GM12878 (cell line): ENCODE measurements at regions of chr1 and their contacts with region 1.

Region 1: DNA sequence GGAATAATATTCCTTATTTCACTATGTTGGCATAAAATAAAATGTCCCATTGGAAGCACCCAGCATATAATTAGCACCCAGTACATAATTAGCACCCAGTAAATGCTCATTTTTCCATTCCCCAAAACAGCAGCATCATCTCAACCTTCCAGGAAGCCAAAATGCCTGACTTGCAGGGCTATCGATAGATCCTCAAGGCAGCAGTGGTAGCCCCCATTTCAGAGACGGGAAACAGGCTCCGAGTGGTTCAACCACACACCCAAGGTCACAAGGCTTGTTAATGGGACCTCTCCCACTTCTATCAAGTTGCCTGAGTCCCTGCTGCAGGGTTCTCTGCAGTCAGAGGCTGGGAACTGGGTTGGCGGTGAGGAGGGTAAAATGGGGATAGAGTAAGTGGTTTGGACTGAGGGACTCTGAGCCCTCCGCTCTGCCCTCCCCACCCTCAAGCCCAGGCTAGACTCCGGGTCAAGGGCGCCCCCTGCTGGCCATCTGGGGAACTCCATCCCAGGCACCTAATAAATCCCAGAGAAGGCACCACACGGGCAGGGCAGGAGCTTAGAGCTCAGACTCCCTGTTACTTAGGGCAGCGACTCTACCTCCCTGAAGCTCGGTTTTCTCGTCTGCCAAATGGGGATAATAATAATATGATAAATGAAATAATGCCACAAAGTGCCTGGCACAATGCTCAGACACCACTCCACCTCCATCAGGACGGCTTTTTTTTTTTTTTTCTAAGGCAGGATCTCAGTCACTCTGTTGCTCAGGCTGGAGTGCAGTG is 21.9 kb upstream of the LAPTM5 start:
- DNase-seq: no peak
- ATAC-seq: peak; percentile 87
- H3K4me3 ChIP-seq: no peak overlapping the region
- H3K27ac ChIP-seq: no peak overlapping the region
- H3K4me1 ChIP-seq: peaks cover 21% of the 10 kb centered on the region
- H3K27me3 ChIP-seq: no peaks in the 10 kb centered on the region
- CTCF ChIP-seq: peak; percentile 91 to 97 (median 97)
- EP300 ChIP-seq: no peak
- POLR2A ChIP-seq: no peak
- RAD21 ChIP-seq: peak; percentile 99

Region 2: DNA sequence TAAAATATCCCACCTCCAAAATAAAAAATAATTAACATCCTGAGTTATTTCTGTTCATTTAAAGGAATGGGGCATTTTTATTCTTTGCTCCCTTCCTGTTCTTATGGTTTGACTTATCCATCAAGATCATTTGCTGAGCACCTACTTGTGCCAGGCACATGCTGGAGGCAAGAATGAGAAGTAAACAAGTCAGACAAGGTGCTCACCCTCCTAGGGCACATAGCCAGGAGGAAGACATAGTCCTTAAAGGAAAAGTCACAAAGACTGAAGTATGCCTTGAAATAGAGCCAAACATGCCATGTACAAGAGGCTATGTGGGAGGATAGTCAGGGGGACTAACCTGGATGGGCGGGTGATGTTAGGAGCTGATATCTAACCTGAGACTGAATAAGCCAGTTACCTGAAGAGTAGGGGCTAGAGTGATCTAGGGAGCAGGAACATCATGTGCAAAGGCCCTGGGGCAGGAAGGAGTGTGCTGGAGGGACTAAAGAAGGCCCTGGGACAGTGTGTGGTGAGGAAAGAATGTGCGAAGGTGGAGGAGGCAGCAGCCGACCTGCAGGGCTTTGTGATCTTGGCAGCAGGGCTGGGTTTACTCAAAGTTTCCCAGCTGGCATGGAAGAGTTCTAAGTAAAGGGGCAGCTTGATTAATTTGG is 289.6 kb before region 1 on chr1:
- CTCF ChIA-PET with region 1: no interaction called
- POLR2A ChIA-PET with region 1: no interaction called
- RAD21 ChIA-PET with region 1: no interaction called
- SMC1A ChIA-PET with region 1: no interaction called
- in situ Hi-C with region 1: no loop called
- intact Hi-C with region 1: no loop called
- DNase-seq: no peak
- ATAC-seq: no peak
- H3K4me3 ChIP-seq: no peak overlapping the region
- H3K27ac ChIP-seq: no peak overlapping the region
- H3K4me1 ChIP-seq: no peaks in the 10 kb centered on the region
- H3K27me3 ChIP-seq: no peaks in the 10 kb centered on the region; a peak in 1 of 4 replicates
- CTCF ChIP-seq: no peak
- EP300 ChIP-seq: no peak
- POLR2A ChIP-seq: no peak
- RAD21 ChIP-seq: no peak

Region 3: GRCh38 chr1:30718636-30719405 is 60.7 kb before region 1 on chr1:
- CTCF ChIA-PET with region 1: interaction called, 516 read pairs
- POLR2A ChIA-PET with region 1: interaction called, 79 read pairs
- RAD21 ChIA-PET with region 1: interaction called, 538 read pairs
- SMC1A ChIA-PET with region 1: interaction called, 427 read pairs
- in situ Hi-C with region 1: loop called (anchors 10 kb)
- intact Hi-C with region 1: loop called (anchors 1 kb)
- DNase-seq: peak; percentile 71
- ATAC-seq: peak; percentile 84
- H3K4me3 ChIP-seq: peak overlapping the region; percentile 90
- H3K27ac ChIP-seq: peak overlapping the region; percentile 93
- H3K4me1 ChIP-seq: peaks cover 18% of the 10 kb centered on the region
- H3K27me3 ChIP-seq: no peaks in the 10 kb centered on the region
- CTCF ChIP-seq: peak; percentile 86 to 95 (median 87); a peak in 5 of 6 replicates
- EP300 ChIP-seq: peak in 1 of 2 experiments; percentile 22; a peak in 1 of 4 replicates
- POLR2A ChIP-seq: peak; percentile 87
- RAD21 ChIP-seq: no peak

Region 4: GRCh38 chr1:30743584-30744059 is 35.9 kb before region 1 on chr1:
- CTCF ChIA-PET with region 1: interaction called, 161 read pairs
- POLR2A ChIA-PET with region 1: interaction called, 5 read pairs
- RAD21 ChIA-PET with region 1: interaction called, 71 read pairs
- SMC1A ChIA-PET with region 1: interaction called, 248 read pairs
- in situ Hi-C with region 1: no loop called
- intact Hi-C with region 1: loop called (anchors 5 kb)
- DNase-seq: peak; percentile 82
- ATAC-seq: peak; percentile 44
- H3K4me3 ChIP-seq: peak overlapping the region; percentile 98
- H3K27ac ChIP-seq: peak overlapping the region; percentile 93
- H3K4me1 ChIP-seq: peaks cover 91% of the 10 kb centered on the region
- H3K27me3 ChIP-seq: no peaks in the 10 kb centered on the region
- CTCF ChIP-seq: no peak; a peak in 1 of 6 replicates
- EP300 ChIP-seq: peak in 1 of 2 experiments; percentile 71; a peak in 2 of 4 replicates
- POLR2A ChIP-seq: no peak; the same call in 1 of the 2 replicates
- RAD21 ChIP-seq: no peak

Region 5: GRCh38 chr1:30763651-30764248 is 15.7 kb before region 1 on chr1:
- CTCF ChIA-PET with region 1: interaction called, 72 read pairs
- POLR2A ChIA-PET with region 1: interaction called, 42 read pairs
- RAD21 ChIA-PET with region 1: interaction called, 198 read pairs
- SMC1A ChIA-PET with region 1: interaction called, 248 read pairs
- in situ Hi-C with region 1: no loop called
- intact Hi-C with region 1: no loop called
- DNase-seq: no peak
- ATAC-seq: no peak
- H3K4me3 ChIP-seq: no peak overlapping the region
- H3K27ac ChIP-seq: peak overlapping the region; percentile 87
- H3K4me1 ChIP-seq: peaks cover 82% of the 10 kb centered on the region
- H3K27me3 ChIP-seq: no peaks in the 10 kb centered on the region
- CTCF ChIP-seq: no peak
- EP300 ChIP-seq: no peak
- POLR2A ChIP-seq: no peak
- RAD21 ChIP-seq: no peak

Region 6: DNA sequence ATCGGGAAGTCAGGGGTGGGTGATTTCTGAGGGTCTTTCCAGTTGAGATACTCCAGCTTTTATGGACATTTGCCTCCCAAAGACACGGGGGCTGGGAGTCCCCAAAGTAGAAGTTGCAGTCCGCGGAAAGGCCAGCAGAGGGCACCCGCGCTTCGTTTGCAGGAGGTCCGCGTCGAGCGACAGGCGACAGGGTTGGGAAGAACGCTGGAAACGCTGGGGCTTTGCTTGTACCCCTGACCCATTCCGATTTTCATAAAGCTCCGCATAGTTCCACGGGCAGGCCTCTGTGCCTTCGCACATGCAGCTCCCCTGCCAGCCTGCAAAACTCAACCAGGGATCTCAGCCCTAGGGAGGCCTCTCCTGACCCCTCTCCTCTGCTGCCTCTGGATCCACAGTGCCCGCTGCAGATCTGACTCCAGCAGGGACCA is 22.3 kb after region 1 on chr1:
- CTCF ChIA-PET with region 1: interaction called, 78 read pairs
- POLR2A ChIA-PET with region 1: interaction called, 3 read pairs
- RAD21 ChIA-PET with region 1: interaction called, 16 read pairs
- SMC1A ChIA-PET with region 1: interaction called, 7 read pairs
- in situ Hi-C with region 1: no loop called
- intact Hi-C with region 1: no loop called
- DNase-seq: no peak
- ATAC-seq: peak; percentile 86
- H3K4me3 ChIP-seq: no peak overlapping the region
- H3K27ac ChIP-seq: no peak overlapping the region
- H3K4me1 ChIP-seq: no peaks in the 10 kb centered on the region
- H3K27me3 ChIP-seq: peaks cover 11 to 17% of the 10 kb centered on the region in 2 experiments
- CTCF ChIP-seq: peak; percentile 94 to 95 (median 95)
- EP300 ChIP-seq: no peak
- POLR2A ChIP-seq: no peak
- RAD21 ChIP-seq: peak; percentile 97

Region 7: GRCh38 chr1:30823969-30824735 is 44.7 kb after region 1 on chr1:
- CTCF ChIA-PET with region 1: no interaction called
- POLR2A ChIA-PET with region 1: no interaction called
- RAD21 ChIA-PET with region 1: no interaction called
- SMC1A ChIA-PET with region 1: no interaction called
- in situ Hi-C with region 1: no loop called
- intact Hi-C with region 1: no loop called
- DNase-seq: peak; percentile 37
- ATAC-seq: peak; percentile 99
- H3K4me3 ChIP-seq: no peak overlapping the region; the same call in 1 of the 2 replicates
- H3K27ac ChIP-seq: no peak overlapping the region
- H3K4me1 ChIP-seq: peaks cover 6% of the 10 kb centered on the region
- H3K27me3 ChIP-seq: peaks cover 11 to 15% of the 10 kb centered on the region in 2 experiments; a peak in 3 of 4 replicates
- CTCF ChIP-seq: no peak
- EP300 ChIP-seq: no peak
- POLR2A ChIP-seq: no peak
- RAD21 ChIP-seq: no peak

Region 8: GRCh38 chr1:30919025-30919881 is 139.8 kb after region 1 on chr1:
- CTCF ChIA-PET with region 1: interaction called, 89 read pairs
- POLR2A ChIA-PET with region 1: interaction called, 3 read pairs
- RAD21 ChIA-PET with region 1: interaction called, 41 read pairs
- SMC1A ChIA-PET with region 1: interaction called, 49 read pairs
- in situ Hi-C with region 1: no loop called
- intact Hi-C with region 1: no loop called
- DNase-seq: no peak
- ATAC-seq: peak; percentile 36; the same call in 1 of the 3 replicates
- H3K4me3 ChIP-seq: no peak overlapping the region
- H3K27ac ChIP-seq: no peak overlapping the region
- H3K4me1 ChIP-seq: no peaks in the 10 kb centered on the region
- H3K27me3 ChIP-seq: no peaks in the 10 kb centered on the region
- CTCF ChIP-seq: no peak
- EP300 ChIP-seq: no peak
- POLR2A ChIP-seq: no peak
- RAD21 ChIP-seq: no peak

Region 9: DNA sequence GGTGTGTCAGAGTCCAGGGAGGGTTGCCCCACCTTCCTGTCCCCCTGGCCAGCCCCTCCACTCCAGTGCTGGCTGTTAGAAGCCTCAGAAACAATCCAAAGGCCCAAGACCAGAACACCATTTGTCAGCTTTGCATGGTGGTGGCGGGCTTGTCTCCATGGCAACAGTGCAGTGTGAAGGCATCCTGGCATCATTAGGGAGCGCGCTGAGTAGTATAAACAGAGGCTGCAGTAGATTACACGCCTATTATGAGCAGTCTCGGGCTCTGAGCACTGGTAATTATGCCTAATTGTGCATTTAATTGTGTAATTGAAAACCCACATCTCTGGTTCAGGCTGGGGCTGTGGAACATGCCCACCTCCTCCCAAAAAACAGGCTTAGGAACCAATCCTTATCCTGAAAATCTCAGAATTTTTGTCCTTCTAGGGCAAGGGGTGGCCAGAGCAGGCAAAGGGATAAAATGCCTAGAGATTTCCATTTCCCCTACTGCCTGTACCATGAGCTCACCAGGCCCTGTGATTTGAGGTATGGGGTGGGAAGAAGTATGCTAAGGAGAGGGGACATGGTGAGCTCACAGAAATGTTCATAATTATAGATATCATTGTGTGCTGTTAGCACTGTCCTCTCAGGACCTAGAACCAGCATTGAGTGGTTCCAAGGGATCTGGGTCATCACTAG is 448.5 kb after region 1 on chr1:
- CTCF ChIA-PET with region 1: no interaction called
- POLR2A ChIA-PET with region 1: no interaction called
- RAD21 ChIA-PET with region 1: no interaction called
- SMC1A ChIA-PET with region 1: no interaction called
- in situ Hi-C with region 1: no loop called
- intact Hi-C with region 1: no loop called
- DNase-seq: no peak
- ATAC-seq: no peak
- H3K4me3 ChIP-seq: no peak overlapping the region
- H3K27ac ChIP-seq: no peak overlapping the region
- H3K4me1 ChIP-seq: no peaks in the 10 kb centered on the region
- H3K27me3 ChIP-seq: no peaks in the 10 kb centered on the region
- CTCF ChIP-seq: no peak
- EP300 ChIP-seq: no peak
- POLR2A ChIP-seq: no peak
- RAD21 ChIP-seq: no peak